ENCODE measurements at regions of chr10 and their contacts with region 1.

Region 1: DNA sequence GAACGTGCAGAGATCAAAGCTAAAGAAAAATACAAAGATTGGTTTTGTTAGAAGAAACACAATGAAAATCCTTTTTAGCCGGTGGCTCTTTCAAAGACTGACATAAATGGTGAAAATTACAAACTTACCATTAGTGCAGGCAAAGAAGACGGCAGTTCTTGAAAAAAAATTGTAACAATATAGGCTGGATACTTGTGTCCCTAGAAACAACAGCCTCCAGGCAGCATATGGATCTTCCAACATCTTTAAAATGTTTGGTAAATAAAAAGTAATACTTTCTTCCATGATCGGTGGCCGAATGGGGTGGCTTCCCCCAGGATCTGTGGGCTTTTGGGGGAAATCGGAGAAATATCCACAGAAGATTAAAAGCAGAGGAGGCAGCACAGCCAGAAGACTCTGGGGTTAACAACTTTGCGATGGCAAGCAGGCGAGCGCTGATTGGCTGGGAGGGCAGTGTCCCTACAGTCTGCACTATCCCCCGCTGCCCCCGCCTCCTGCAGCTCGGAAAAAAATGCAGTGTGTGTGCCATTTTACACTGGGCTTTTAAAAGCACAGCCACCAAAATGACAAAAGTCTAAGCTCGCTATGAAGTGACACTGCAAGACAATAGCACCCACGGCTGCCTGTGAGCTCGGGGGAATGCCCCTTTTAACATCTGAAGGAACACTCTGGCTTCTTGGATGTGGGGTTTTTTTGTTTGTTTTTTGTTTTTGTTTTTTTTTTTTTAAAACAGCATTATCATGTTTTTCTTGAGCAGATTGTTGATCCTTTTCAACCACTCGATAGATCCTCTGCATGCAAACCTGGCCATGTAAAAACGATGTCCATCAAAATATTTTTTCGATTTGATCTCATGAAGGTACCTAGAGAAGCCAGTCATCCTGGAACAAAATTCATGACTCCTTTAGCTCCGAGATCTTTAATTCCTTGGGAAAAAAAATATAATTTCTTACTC is 31.7 kb upstream of the EPC1 start:
- DNase-seq: peak; percentile 98
- ATAC-seq: peak; percentile 99

Region 2: DNA sequence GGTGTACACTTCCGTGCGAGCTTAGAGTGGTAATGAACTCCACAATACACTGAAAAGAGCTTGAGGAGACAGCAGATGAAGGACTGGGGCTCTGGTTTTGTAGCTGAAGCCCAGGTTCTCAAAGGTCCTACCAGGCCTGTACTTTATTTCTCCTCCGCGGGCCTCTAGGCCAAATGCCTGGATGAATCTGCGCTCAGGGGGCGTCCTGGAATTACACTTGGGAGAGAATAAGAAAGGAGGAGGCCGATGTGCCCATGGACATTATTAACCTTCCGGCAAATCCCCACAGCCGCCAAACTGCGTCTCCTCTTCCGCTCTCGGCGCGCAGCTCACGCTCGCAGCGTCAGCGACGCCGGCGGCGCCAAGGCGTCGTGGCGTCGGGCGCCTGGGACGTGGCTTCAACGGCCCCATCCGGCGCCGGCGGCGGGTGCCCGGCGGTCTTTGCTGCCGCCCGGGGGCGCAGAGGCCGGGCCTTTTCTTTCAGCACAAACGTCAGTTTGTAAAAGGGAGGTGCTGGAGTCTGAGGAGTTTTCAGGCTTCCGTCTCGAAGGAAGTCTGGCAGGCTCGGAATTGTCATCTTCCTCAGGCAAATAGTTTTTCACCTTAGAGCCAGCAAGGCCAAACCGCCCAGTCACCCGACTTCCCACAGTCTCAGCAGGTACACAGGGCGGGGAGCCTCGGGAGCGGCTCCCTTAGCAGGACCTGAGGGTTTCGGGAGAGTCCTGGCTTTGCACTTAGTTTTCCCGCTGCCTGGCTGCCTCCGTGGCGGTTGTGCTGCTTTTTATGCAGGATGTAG is 67.3 kb after region 1 on chr10 and contains the start of gene CCDC7:
- intact Hi-C with region 1: loop called (anchors 2 kb)
- DNase-seq: peak; percentile 93
- ATAC-seq: peak; percentile 99
- total RNA-seq, gene CCDC7: 22.2 TPM

Measured in Right ventricle myocardium inferior (tissue), 1 donor.